Heart left ventricle (tissue), 16 donors: ENCODE measurements at regions of chr22 and their contacts with region 1.

Region 1: GRCh38 chr22:24926849-24927579 is 19.5 kb downstream of the LHFPL7 start:
- DNase-seq: no peak
- ATAC-seq: no peak
- H3K4me3 ChIP-seq: no peak overlapping the region
- H3K27ac ChIP-seq: no peak overlapping the region
- H3K4me1 ChIP-seq: peaks cover 0 to 5% (median 0%) of the 10 kb centered on the region in 12 donors
- H3K27me3 ChIP-seq: no peaks in the 10 kb centered on the region
- CTCF ChIP-seq: no peak
- POLR2A ChIP-seq: no peak

Region 2: DNA sequence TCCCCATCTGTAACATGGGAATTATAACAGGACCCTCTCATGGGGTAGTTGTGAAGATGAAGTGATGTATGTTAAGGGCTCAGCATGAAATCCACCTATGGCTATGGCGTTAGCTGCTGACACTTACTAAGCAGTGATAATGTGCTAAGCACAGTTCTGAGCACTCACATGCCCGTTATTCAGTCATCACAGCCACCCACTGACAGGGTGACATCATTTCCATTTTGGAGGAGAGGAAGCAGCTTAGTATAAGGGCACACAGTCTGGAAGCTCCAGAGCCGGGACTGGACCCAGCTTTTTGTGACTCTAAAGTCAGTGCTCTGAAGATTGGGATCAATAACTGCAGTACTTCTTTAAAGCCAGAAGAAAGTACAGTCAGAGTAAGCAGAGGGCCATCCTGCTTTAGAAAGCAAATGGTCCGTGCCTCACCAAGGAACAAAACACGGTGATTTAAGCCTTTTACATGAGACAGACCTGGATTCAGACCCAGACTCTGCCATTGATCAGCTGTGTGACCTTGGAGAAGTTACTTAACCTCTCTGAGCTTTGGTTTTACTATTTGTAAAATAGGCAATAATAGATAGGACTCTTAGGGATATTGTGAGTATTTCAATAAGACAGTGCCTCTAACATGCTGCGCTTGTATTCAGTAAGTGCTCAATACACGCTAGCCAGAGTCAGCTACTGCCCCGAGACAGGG is 59.5 kb before region 1 on chr22:
- intact Hi-C with region 1: loop called in 1 of 10 experiments (anchors 10 kb)
- DNase-seq: no peak
- ATAC-seq: peak; percentile 67 to 91 (median 80)
- H3K4me3 ChIP-seq: no peak overlapping the region
- H3K27ac ChIP-seq: no peak overlapping the region
- H3K4me1 ChIP-seq: peaks cover 0 to 10% (median 0%) of the 10 kb centered on the region in 12 donors
- H3K27me3 ChIP-seq: no peaks in the 10 kb centered on the region
- CTCF ChIP-seq: no peak
- POLR2A ChIP-seq: no peak

Region 3: GRCh38 chr22:24894220-24894975 is 32.6 kb before region 1 on chr22:
- intact Hi-C with region 1: loop called in 1 of 10 experiments (anchors 2 kb)
- DNase-seq: peak; percentile 80 to 91 (median 85)
- ATAC-seq: peak; percentile 91 to 96 (median 93)
- H3K4me3 ChIP-seq: peak overlapping the region in 9 of 12 donors; percentile 0 to 30 (median 16)
- H3K27ac ChIP-seq: peak overlapping the region; percentile 50 to 86 (median 82)
- H3K4me1 ChIP-seq: peaks cover 0 to 22% (median 17%) of the 10 kb centered on the region in 12 donors
- H3K27me3 ChIP-seq: no peaks in the 10 kb centered on the region
- CTCF ChIP-seq: no peak
- POLR2A ChIP-seq: no peak